ENCODE measurements at regions of chr1 and their contacts with region 1.

Region 1: DNA sequence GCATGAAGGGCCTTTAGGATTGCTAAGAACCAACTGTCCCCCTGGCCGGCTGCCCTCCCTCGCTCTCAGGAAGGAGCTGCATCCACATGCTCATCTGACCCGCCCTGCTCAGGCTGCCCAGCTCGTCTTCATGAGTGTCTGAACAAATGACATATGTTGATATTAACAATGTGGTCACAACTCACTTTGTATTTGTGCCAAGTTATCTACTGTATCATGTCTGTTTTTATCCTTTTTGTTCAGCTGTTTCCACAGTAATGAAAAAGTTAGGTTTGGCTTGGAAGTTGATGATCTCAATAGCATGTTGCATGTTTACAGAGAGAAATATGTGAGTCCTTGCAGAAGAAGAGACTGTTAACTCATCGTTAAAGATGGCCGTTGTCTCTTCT is 75.1 kb downstream of the PHTF1 start:
- DNase-seq: peak; percentile 73 to 87 (median 77)
- H3K4me3 ChIP-seq: no peak overlapping the region
- H3K27ac ChIP-seq: peak overlapping the region; percentile 48 to 74
- H3K4me1 ChIP-seq: peaks cover 3% of the 10 kb centered on the region
- H3K27me3 ChIP-seq: no peaks in the 10 kb centered on the region
- CTCF ChIP-seq: no peak
- EP300 ChIP-seq: no peak
- POLR2A ChIP-seq: no peak

Region 2: GRCh38 chr1:111704776-111705175 is 1979.4 kb before region 1 on chr1:
- intact Hi-C with region 1: loop called in 1 of 4 experiments (anchors 5 kb)
- DNase-seq: no peak
- H3K4me3 ChIP-seq: no peak overlapping the region
- H3K27ac ChIP-seq: no peak overlapping the region
- H3K4me1 ChIP-seq: no peaks in the 10 kb centered on the region
- H3K27me3 ChIP-seq: no peaks in the 10 kb centered on the region
- CTCF ChIP-seq: no peak
- EP300 ChIP-seq: no peak
- POLR2A ChIP-seq: no peak

Region 3: GRCh38 chr1:113140588-113141446 is 543.3 kb before region 1 on chr1:
- intact Hi-C with region 1: loop called (anchors 5 to 10 kb)
- DNase-seq: peak; percentile 55 to 67 (median 64)
- H3K4me3 ChIP-seq: no peak overlapping the region
- H3K27ac ChIP-seq: peak overlapping the region in 1 of 2 donors; percentile 48
- H3K4me1 ChIP-seq: peaks cover 9% of the 10 kb centered on the region
- H3K27me3 ChIP-seq: no peaks in the 10 kb centered on the region
- CTCF ChIP-seq: peak; percentile 52 to 79 (median 76)
- EP300 ChIP-seq: no peak
- POLR2A ChIP-seq: no peak

Region 4: GRCh38 chr1:113325039-113325438 is 359.1 kb before region 1 on chr1:
- intact Hi-C with region 1: no loop called
- DNase-seq: no peak
- H3K4me3 ChIP-seq: no peak overlapping the region
- H3K27ac ChIP-seq: no peak overlapping the region
- H3K4me1 ChIP-seq: no peaks in the 10 kb centered on the region
- H3K27me3 ChIP-seq: no peaks in the 10 kb centered on the region
- CTCF ChIP-seq: no peak
- EP300 ChIP-seq: no peak
- POLR2A ChIP-seq: no peak

Region 5: DNA sequence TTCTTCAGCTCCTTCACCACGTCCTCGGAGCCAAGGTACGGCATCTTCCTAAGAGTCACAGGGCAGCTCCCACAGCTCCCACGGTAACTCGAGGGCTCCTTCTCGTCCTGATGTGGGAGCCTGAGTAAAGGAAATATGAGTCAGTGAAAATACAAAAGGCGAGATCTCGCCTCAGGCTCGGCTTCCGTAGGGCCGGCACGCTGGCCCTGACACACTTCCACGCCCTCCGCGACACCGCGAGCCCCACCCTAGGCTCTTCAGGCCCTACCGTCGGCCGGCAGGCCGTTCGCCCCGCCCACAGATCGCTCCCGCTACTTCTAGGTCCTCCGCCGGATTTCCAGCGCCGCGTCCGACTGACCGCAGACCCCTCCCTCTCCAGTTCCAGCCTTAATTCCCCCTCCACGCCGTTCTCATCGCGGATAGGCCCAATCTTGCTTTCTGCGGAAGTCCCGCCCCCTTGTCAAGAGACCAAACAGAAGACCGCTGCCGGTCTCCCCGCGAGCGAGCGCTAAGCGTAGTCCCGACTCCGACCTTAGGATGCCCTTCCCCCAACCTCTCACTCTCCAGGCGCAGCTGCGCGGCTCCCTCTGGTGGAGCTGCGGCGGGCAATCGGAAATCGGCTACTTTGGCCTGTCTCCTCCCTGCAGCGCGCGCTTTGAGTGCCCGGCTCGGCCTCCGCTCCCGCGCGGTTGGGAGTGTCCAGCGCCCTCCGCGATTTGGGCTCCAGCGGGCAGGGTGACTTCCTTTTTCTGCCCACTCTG is 220.7 kb after region 1 on chr1 and contains the starts of genes AP4B1 and DCLRE1B:
- intact Hi-C with region 1: loop called in 1 of 4 experiments (anchors 10 kb)
- DNase-seq: peak; percentile 97 to 99 (median 98)
- H3K4me3 ChIP-seq: peak within 1 kb of the TSS; percentile 71
- H3K27ac ChIP-seq: peak within 1 kb of the TSS; percentile 77 to 86
- H3K4me1 ChIP-seq: peaks cover 2% of the 10 kb centered on the region
- H3K27me3 ChIP-seq: no peaks in the 10 kb centered on the region
- CTCF ChIP-seq: peak; percentile 77 to 93 (median 90)
- EP300 ChIP-seq: no peak
- POLR2A ChIP-seq: peak; percentile 54
- total RNA-seq, gene AP4B1: 14.4 to 23.3 (median 16.9) TPM
- total RNA-seq, gene DCLRE1B: 2.4 to 6.8 (median 5.0) TPM